ENCODE measurements at regions of chr21 and their contacts with region 1.

Region 1: DNA sequence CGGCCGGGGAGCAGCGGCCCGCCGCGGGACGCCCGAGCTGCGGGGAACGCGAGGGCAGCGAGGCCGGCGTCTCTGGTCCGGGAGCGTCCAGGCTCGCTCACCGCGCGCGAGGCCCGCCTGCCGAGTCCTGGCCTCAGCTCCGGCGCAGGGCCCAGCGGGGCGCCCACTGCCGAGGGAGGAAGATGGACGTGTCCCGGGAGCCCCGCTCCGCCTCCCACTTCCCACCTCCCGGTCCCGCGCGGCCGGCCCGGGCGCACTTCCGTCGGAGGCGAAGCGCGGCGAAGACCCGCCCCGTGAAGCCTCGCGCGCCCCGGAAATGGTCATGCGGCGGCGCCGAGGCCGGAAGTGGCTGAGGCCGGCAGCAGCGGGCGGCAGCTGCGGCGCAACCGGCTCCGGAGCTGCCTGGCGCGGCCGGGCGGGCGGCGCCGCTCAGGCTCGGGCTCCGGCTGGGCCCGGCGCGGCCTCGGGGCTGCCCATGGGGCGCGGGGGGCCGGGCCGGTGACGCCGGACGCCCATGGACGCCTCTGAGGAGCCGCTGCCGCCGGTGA is at the start of gene TRAPPC10:
- DNase-seq: peak; percentile 90
- ATAC-seq: peak; percentile 72
- H3K4me3 Mint-ChIP-seq: peak within 1 kb of the TSS; percentile 87
- H3K27ac Mint-ChIP-seq: peak within 1 kb of the TSS; percentile 93
- H3K4me1 Mint-ChIP-seq: peaks cover 42% of the 10 kb centered on the region
- H3K27me3 Mint-ChIP-seq: no peaks in the 10 kb centered on the region
- total RNA-seq, gene TRAPPC10: 40.2 to 58.7 TPM

Region 2: GRCh38 chr21:43767984-43768867 is 243.8 kb before region 1 on chr21:
- CTCF ChIA-PET with region 1: no interaction called
- POLR2A ChIA-PET with region 1: no interaction called
- intact Hi-C with region 1: no loop called
- DNase-seq: no peak
- ATAC-seq: no peak
- H3K4me3 Mint-ChIP-seq: no peak overlapping the region
- H3K27ac Mint-ChIP-seq: no peak overlapping the region
- H3K4me1 Mint-ChIP-seq: peaks cover 6% of the 10 kb centered on the region
- H3K27me3 Mint-ChIP-seq: no peaks in the 10 kb centered on the region

Region 3: GRCh38 chr21:43789276-43790009 is 222.6 kb before region 1 on chr21 and contains the start of gene RRP1:
- CTCF ChIA-PET with region 1: no interaction called
- POLR2A ChIA-PET with region 1: no interaction called
- intact Hi-C with region 1: loop called in 1 of 2 experiments (anchors 1 kb)
- DNase-seq: peak; percentile 96
- ATAC-seq: peak; percentile 90
- H3K4me3 Mint-ChIP-seq: peak within 1 kb of the TSS; percentile 95
- H3K27ac Mint-ChIP-seq: peak within 1 kb of the TSS; percentile 92
- H3K4me1 Mint-ChIP-seq: peaks cover 21% of the 10 kb centered on the region
- H3K27me3 Mint-ChIP-seq: no peaks in the 10 kb centered on the region
- total RNA-seq, gene RRP1: 51.7 to 53.4 TPM

Region 4: GRCh38 chr21:43929217-43930025 is 82.6 kb before region 1 on chr21:
- CTCF ChIA-PET with region 1: no interaction called
- POLR2A ChIA-PET with region 1: no interaction called
- intact Hi-C with region 1: no loop called
- DNase-seq: no peak
- ATAC-seq: no peak
- H3K4me3 Mint-ChIP-seq: no peak overlapping the region
- H3K27ac Mint-ChIP-seq: no peak overlapping the region
- H3K4me1 Mint-ChIP-seq: peaks cover 5% of the 10 kb centered on the region
- H3K27me3 Mint-ChIP-seq: no peaks in the 10 kb centered on the region

Region 5: DNA sequence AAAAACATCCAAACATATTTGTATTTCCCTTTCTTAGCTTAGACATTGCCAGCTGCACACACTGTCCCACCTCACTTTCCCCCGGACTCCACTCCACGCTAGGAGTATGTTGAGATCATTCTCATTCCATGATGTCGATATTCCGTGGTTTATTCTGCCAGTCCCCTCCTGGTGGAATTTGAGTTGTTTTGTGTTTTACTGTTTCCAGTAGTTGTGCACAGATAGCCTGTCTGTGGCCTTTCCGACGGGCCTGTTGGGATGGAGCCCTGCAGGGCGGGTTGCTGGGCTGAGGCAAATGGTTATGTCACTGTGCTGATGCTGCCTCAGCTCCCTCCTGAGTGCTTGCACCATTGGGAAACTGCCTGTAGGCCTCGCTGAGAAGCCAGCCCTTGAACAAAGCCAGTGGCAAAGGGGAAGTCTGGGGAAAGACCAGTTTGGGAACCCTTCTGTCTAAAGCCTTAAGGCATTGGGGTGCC is 12.9 kb after region 1 on chr21:
- CTCF ChIA-PET with region 1: interaction called, 12 read pairs
- POLR2A ChIA-PET with region 1: no interaction called
- intact Hi-C with region 1: loop called (anchors 1 kb)
- DNase-seq: peak; percentile 22
- ATAC-seq: no peak
- H3K4me3 Mint-ChIP-seq: no peak overlapping the region
- H3K27ac Mint-ChIP-seq: peak overlapping the region; percentile 83
- H3K4me1 Mint-ChIP-seq: peaks cover 86% of the 10 kb centered on the region
- H3K27me3 Mint-ChIP-seq: no peaks in the 10 kb centered on the region

Region 6: GRCh38 chr21:44083631-44084291 is 71.7 kb after region 1 on chr21:
- CTCF ChIA-PET with region 1: interaction called, 25 read pairs
- POLR2A ChIA-PET with region 1: interaction called, 7 read pairs
- intact Hi-C with region 1: loop called (anchors 1 to 2 kb)
- DNase-seq: peak; percentile 82
- ATAC-seq: peak; percentile 76
- H3K4me3 Mint-ChIP-seq: peak overlapping the region; percentile 55
- H3K27ac Mint-ChIP-seq: peak overlapping the region; percentile 98
- H3K4me1 Mint-ChIP-seq: peaks cover 85% of the 10 kb centered on the region
- H3K27me3 Mint-ChIP-seq: no peaks in the 10 kb centered on the region

Region 7: GRCh38 chr21:44487831-44488230 is 475.8 kb after region 1 on chr21:
- CTCF ChIA-PET with region 1: no interaction called
- POLR2A ChIA-PET with region 1: no interaction called
- intact Hi-C with region 1: loop called in 1 of 2 experiments (anchors 5 kb)
- DNase-seq: peak; percentile 83
- ATAC-seq: peak; percentile 44
- H3K4me3 Mint-ChIP-seq: no peak overlapping the region
- H3K27ac Mint-ChIP-seq: no peak overlapping the region
- H3K4me1 Mint-ChIP-seq: peaks cover 5% of the 10 kb centered on the region
- H3K27me3 Mint-ChIP-seq: peaks cover 2% of the 10 kb centered on the region